Cardiac septum (tissue), 1 donor: ENCODE measurements at regions of chr11 and their contacts with region 1.

Region 1: GRCh38 chr11:75388386-75389275 is 10.7 kb upstream of the RPS3 start:
- DNase-seq: no peak

Region 2: DNA sequence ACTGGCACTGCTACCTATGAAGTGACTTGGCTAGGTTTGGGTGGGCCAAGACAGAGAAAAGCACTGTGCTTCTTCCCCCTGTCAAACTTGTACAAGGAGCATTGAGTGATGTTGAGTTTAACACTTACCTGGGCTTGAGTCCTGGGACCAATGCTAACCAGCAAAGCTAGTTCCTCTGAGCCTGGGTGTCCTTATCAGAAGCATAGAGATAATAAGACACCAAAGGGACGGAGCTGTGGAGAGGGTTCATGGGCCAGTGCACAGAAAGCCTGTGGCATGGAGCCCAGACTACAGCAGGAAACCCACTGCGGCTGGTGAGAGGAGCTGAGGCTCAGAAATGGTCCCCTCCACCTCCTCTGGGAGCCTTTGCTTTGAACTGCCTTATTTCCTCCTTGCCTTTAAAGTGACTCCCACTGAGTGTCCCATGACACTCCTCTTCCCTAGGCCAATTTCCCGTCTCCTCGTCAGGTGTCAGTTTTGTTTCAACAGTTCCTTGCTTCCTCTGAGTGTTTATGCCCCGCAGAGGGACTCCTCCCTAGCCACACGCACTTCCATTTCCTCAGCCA is 228.4 kb before region 1 on chr11:
- intact Hi-C with region 1: no loop called
- DNase-seq: no peak

Region 3: GRCh38 chr11:75280227-75280701 is 108.4 kb before region 1 on chr11:
- intact Hi-C with region 1: loop called (anchors 1 kb)
- DNase-seq: peak; percentile 92

Region 4: DNA sequence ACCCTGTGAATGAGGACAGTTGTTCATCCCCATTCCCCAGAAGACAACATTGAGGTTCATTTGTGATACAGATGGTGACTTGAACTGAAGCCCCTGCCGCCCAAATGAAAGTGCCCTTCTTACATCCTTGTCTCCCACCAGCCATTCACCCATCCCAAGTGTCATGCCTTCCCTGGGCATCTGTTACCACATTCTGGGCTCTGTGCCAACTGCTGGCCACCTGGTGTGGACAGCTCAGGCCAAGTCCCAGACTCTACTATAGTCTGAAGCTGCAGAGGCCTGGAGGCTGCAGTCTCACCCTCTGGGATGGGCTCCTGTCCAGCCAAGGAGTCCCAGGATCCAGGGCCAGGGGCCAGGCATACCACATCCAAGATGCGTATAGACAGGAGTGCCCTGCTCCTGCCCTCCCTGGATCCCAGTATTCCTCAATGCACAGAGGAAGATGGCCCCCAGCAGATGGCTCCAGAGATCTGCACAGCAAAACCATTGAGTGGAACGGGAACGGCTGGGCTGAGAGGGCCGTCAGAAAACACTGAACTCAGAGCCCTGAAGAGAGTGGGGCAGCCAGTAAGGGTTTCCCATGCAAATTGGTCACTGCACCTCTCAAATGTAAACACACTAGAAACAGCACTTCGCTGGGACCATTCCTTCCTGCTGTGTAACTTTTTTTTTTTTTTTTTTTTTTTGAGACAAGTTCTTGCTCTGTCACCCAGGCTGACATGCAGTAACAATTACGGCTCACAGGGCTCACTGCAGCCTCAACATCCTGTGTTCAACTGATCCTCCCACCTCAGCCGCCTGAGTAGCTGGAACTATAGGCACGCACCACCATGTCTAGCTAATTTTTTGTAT is 60.0 kb before region 1 on chr11:
- intact Hi-C with region 1: loop called (anchors 1 kb)
- DNase-seq: no peak

Region 5: DNA sequence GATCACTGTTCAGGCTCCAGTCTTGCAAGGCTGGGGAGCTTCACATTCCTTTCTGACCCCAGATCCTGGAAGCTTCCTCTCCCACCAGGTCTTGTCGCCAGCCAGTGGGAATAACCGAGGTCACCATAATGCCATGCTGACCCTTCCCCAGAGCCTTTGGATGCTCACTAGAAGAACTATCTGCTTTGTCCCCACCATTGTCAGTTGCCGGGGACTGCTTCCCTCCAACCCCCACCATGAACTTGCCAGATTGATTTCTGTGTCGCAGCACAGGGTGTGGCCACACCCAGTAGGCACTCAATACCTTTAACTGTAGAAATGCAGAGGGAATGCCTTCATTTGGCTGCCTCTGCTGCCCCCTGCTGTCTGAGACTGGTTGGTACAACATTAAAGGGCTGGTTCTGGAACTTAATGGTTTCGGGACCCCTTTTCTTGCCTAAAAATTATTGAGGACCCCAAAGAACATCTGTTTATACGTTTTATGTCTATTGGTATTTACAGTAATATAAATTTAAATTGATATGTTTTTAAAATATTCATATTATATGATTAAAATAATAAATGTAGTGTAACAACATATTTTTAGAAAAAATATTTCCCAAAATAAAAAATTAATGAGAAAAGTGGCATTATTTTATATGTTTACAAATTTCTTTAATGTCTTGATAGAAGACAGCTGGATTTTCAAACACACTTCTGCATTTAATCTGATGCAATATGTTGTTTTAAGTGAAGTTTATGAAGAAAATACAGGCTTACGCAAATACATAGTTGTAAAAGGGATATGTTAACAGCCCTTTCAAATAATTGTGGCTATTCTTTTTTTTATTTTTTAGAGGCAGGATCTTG is 143.8 kb after region 1 on chr11:
- intact Hi-C with region 1: loop called (anchors 5 kb)
- DNase-seq: peak; percentile 84

Region 6: GRCh38 chr11:75547580-75548058 is 159.0 kb after region 1 on chr11:
- intact Hi-C with region 1: no loop called
- DNase-seq: no peak

Region 7: DNA sequence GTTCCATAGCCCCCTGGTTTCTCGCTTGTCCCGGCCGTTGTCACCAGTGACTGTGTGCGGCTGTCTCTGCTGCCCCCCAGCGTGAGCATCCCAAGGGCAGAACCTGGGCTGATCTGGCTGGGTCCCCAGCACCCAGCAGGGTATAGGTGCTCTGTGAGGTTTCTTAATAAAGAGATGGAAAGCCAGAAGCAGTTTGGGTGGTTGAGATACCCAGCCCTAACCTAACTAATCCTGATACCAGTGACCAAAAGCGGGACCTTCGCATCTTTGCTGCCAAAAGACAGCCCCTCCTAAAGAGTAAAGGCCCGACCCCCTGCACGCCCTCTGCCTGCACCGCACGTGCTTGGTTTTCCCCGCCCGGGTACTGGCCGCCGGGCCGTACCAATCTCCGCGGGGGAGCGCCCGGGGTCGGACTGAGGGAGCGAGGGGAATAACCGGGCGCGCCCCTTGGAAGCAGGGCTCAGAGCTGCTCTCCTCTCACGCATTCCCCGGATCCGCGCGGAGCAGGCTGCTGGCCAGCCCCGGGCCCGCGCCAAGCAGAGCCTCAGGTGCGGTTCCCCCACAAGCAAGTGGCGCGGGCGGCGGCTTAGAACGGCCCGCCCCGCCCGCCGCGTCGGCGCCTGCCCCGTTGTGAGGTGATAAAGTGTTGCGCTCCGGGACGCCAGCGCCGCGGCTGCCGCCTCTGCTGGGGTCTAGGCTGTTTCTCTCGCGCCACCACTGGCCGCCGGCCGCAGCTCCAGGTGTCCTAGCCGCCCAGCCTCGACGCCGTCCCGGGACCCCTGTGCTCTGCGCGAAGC is 379.7 kb after region 1 on chr11 and contains the start of gene DGAT2:
- intact Hi-C with region 1: no loop called
- DNase-seq: peak; percentile 92
- total RNA-seq, gene DGAT2: 10.3 TPM